ENCODE measurements at regions of chr3 and their contacts with region 1.

Region 1: GRCh38 chr3:37806505-37807200 is 55.0 kb upstream of the CTDSPL start:
- H3K4me3 ChIP-seq: no peak overlapping the region
- H3K27ac ChIP-seq: no peak overlapping the region
- H3K4me1 ChIP-seq: no peaks in the 10 kb centered on the region
- CTCF ChIP-seq: no peak

Region 2: DNA sequence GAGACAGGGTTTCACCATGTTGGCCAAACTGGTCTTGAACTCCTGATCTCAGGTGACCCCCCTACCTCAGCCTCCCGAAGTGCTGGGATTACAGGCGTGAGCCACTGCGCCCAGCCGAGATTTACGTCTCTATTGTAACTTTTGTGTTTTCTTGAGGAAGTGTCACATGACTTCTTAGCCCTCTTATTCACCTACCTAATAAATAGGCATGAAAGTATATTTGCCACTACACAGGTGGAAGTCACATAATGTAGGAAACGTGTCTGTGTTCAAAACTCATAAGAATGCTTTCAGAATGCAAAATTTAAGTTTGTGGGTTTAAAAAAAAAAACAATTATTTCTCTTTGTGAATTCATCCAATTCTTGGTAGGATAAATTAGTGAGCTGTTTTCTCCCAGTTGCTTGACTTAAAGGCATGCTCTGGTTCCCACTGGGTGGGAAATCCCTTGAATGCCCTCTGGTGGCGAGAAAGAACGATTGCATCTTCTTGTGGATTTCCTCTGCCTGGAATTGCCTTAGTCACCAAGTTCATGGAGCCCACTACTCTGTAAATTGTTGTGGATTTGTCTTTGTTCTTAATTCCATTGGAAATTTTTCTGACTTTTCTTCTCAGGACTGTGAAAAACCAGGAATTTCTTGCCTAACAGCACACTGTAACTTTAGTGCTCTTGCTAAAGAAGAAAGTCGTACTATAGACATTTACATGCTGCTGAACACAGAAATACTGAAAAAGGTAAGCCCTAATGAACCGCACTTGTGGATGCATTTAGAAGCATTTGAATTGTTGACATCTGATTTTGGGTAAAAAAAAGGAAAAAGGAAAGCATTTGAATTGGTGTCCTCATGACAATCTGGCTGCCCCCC is 27.1 kb before region 1 on chr3:
- CTCF ChIA-PET with region 1: interaction called, 12 read pairs
- POLR2A ChIA-PET with region 1: no interaction called
- H3K4me3 ChIP-seq: no peak overlapping the region
- H3K27ac ChIP-seq: no peak overlapping the region
- H3K4me1 ChIP-seq: no peaks in the 10 kb centered on the region
- CTCF ChIP-seq: no peak

Region 3: DNA sequence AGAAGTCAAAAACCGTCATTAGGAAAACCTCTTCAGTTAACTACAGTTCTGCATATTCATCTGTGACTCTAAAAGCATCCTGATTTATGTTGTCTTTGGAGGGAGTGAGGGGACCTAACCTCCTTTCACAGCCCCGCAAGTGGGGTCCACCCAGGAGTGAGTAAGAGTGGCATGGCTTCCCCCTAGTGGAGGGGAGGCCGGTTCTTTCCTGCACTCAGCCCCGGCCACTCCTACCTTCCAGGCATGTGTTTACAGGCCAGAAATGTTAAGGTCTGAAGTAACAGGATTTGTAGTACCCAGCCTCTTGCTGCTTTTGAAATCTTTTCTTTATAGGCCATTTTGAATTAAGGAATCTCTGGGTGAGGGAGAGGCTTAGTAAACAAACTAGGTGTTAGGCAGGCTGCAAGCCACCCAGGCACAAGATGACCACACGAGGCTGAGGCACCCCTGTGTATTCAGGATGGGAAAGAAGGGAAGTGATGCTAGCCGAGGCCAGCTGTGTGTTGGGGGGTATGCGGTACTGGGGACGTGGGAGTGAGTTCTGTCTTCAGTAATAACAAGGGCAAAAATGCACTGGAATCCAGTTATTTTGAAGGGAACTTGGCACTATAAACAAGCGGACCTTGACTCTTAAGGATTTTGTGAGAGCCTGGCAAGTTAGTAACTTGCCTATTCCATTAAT is 105.5 kb after region 1 on chr3:
- CTCF ChIA-PET with region 1: no interaction called
- POLR2A ChIA-PET with region 1: no interaction called
- H3K4me3 ChIP-seq: no peak overlapping the region
- H3K27ac ChIP-seq: no peak overlapping the region
- H3K4me1 ChIP-seq: no peaks in the 10 kb centered on the region
- CTCF ChIP-seq: no peak